ENCODE measurements at regions of chr15 and their contacts with region 1.

Region 1: DNA sequence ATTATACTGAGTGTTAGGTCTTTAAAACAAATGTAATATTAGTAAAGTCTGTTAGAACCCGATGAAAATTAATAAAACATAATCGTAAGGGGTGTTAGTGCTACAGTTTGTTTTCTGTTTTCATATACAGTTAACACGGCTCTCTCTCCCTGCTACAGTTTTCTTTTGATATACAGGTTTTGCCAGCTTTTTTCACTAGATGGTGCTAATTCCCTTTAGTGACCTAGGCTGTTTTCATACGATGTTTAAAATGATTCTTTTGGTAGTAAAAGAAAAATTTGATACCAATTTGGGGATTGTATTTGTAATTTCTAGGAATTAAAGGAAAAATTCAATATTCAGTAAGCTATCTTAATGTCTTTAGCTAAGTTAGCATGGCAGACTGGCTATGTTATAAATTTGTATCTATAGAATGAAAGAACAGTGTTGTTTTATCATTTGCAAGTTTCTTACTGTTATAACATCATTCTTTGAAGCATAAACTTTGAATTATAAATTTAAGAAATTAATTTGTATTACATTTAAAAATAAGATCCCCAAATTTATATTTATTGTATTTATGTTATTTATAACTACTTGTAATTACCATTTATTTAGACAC is 11.5 kb downstream of the APH1B start:
- DNase-seq: peak; percentile 29 to 69 (median 53)
- ATAC-seq: peak; percentile 77
- H3K4me3 ChIP-seq: no peak overlapping the region
- H3K27ac ChIP-seq: no peak overlapping the region
- H3K4me1 ChIP-seq: peaks cover 4 to 16% of the 10 kb centered on the region in 2 experiments; a peak in 4 of 5 replicates
- H3K27me3 ChIP-seq: no peaks in the 10 kb centered on the region
- CTCF ChIP-seq: peak; percentile 53 to 94 (median 68); a peak in 5 of 6 replicates
- EP300 ChIP-seq: no peak
- POLR2A ChIP-seq: no peak
- RAD21 ChIP-seq: peak; percentile 98

Region 2: DNA sequence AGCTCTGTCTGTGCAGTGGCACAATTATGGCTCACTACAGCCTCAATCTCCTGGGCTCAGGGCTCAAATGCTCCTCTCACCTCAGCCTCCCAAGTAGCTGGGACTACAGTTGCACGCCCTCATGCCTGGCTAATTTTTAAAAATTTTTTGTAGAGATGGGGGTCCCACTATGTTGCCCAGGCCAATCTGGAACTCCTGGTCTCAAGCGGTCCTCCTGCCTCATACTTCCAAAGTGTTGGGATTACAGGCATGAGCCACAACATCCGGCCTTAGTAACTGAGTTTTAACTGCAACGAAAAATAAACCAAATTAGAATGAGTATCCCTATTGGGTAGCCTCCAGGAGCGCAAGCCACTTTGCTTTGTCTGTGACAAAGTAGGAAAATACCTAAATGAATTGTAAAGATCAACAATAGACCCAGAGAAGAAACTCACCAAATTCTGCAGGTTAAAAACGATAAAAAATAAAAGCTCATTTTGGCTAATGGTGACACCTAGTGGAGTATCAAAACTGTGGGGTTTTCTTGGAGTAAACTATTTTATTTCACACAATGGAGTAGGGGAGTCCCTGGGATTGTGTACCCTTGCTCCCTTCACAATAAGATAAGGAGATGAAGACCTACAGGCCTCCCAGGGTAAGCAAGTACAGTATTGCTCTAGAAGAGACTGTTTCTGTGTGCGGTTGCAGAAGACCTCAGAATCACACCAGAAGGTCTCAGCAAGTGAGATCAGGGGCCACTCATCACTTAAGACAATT is 113.8 kb after region 1 on chr15:
- CTCF ChIA-PET with region 1: interaction called, 35 read pairs
- POLR2A ChIA-PET with region 1: interaction called, 3 read pairs
- in situ Hi-C with region 1: loop called (anchors 5 kb)
- intact Hi-C with region 1: loop called (anchors 1 kb)
- DNase-seq: peak in 3 of 4 experiments; percentile 20 to 57 (median 54)
- ATAC-seq: peak; percentile 79
- H3K4me3 ChIP-seq: no peak overlapping the region
- H3K27ac ChIP-seq: no peak overlapping the region
- H3K4me1 ChIP-seq: peaks cover 0 to 12% of the 10 kb centered on the region in 2 experiments; a peak in 3 of 5 replicates
- H3K27me3 ChIP-seq: no peaks in the 10 kb centered on the region
- CTCF ChIP-seq: peak; percentile 53 to 85 (median 58); a peak in 3 of 6 replicates
- EP300 ChIP-seq: no peak
- POLR2A ChIP-seq: no peak
- RAD21 ChIP-seq: peak; percentile 96 to 97

Region 3: DNA sequence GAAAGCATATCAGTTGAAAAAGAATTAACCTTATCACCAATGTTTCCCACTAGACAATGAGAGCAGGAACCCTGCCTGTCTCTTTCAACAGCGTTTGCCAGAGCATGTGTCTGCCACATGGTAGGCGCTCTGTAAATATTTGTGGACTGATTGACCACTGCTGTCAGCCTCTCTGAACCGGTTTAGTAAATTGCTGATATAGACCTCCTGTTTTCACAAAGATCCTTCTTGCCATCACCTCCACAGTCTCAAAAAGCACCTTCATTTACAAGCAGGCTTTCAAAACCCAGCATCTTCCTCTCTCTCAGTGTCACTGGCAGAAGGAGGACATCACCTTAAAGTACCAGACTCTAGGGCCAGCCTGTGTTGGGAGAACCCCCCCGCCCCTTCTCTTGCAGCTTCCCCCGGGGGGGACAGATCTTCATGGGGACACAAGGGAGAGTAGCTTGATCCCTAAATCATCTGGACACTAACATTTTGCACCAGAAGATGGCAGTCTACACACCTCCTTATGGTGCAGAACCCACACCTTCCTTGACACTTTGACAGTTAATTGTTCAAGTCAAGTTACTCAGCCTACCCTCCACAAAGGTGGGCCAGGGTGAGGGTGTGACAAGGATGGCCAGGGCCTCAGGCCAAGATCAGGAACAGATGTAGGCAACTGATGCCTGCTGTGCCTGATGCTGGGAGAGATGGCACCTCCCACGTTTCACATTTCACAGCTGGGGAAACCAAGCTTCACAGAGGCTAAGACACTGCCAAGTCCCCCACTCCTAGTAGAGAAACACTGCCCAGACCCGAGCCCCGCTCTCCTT is 177.7 kb after region 1 on chr15:
- CTCF ChIA-PET with region 1: interaction called, 3 read pairs
- POLR2A ChIA-PET with region 1: no interaction called
- in situ Hi-C with region 1: no loop called
- intact Hi-C with region 1: loop called (anchors 2 kb)
- DNase-seq: peak; percentile 66 to 81 (median 74)
- ATAC-seq: peak; percentile 96
- H3K4me3 ChIP-seq: no peak overlapping the region
- H3K27ac ChIP-seq: no peak overlapping the region
- H3K4me1 ChIP-seq: peaks cover 0 to 8% of the 10 kb centered on the region in 2 experiments; a peak in 2 of 5 replicates
- H3K27me3 ChIP-seq: no peaks in the 10 kb centered on the region
- CTCF ChIP-seq: peak; percentile 71 to 77 (median 76)
- EP300 ChIP-seq: no peak
- POLR2A ChIP-seq: no peak
- RAD21 ChIP-seq: peak; percentile 74 to 89

Region 4: DNA sequence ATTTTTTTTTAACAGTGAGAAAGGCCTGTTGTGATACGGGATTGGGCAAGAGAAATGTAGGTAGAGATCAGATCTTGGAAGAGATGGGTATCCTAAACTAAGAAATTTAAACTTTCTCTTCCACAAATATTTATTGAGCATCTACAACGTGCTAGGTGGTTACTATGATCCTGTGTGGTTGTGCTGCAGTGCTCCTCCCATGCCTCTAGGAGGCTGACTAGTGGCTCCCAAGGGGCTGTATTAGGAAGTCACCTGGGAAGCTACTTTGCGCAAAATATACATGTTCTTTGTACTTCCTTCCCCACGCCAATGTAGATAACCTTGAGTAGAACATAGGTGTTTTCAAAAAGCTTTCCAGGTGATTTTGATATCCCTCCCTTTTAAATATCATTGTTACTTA is 242.7 kb after region 1 on chr15:
- CTCF ChIA-PET with region 1: no interaction called
- POLR2A ChIA-PET with region 1: no interaction called
- in situ Hi-C with region 1: no loop called
- intact Hi-C with region 1: no loop called
- DNase-seq: peak; percentile 38 to 45 (median 44)
- ATAC-seq: peak; percentile 84
- H3K4me3 ChIP-seq: no peak overlapping the region
- H3K27ac ChIP-seq: no peak overlapping the region
- H3K4me1 ChIP-seq: peaks cover 3% of the 10 kb centered on the region in 2 experiments; a peak in 1 of 5 replicates
- H3K27me3 ChIP-seq: no peaks in the 10 kb centered on the region
- CTCF ChIP-seq: peak; percentile 29 to 57 (median 51)
- EP300 ChIP-seq: no peak
- POLR2A ChIP-seq: no peak
- RAD21 ChIP-seq: no peak

Region 5: GRCh38 chr15:63599401-63600000 is 310.6 kb after region 1 on chr15:
- CTCF ChIA-PET with region 1: interaction called, 3 read pairs
- POLR2A ChIA-PET with region 1: no interaction called
- in situ Hi-C with region 1: loop called (anchors 10 kb)
- intact Hi-C with region 1: no loop called
- DNase-seq: peak in 1 of 4 experiments; percentile 16
- ATAC-seq: peak; percentile 37; the same call in 2 of the 3 replicates
- H3K4me3 ChIP-seq: no peak overlapping the region
- H3K27ac ChIP-seq: no peak overlapping the region
- H3K4me1 ChIP-seq: peaks cover 0 to 18% of the 10 kb centered on the region in 2 experiments; a peak in 2 of 5 replicates
- H3K27me3 ChIP-seq: no peaks in the 10 kb centered on the region
- CTCF ChIP-seq: peak; percentile 41 to 56 (median 50)
- EP300 ChIP-seq: no peak
- POLR2A ChIP-seq: no peak
- RAD21 ChIP-seq: peak in 1 of 2 experiments; percentile 73; a peak in 2 of 4 replicates

Region 6: GRCh38 chr15:63610200-63610841 is 321.4 kb after region 1 on chr15:
- CTCF ChIA-PET with region 1: no interaction called
- POLR2A ChIA-PET with region 1: no interaction called
- in situ Hi-C with region 1: no loop called
- intact Hi-C with region 1: loop called (anchors 10 kb)
- DNase-seq: peak; percentile 70 to 84 (median 76)
- ATAC-seq: peak; percentile 97
- H3K4me3 ChIP-seq: no peak overlapping the region
- H3K27ac ChIP-seq: peak overlapping the region; percentile 57
- H3K4me1 ChIP-seq: peaks cover 0 to 11% of the 10 kb centered on the region in 2 experiments; a peak in 3 of 5 replicates
- H3K27me3 ChIP-seq: no peaks in the 10 kb centered on the region
- CTCF ChIP-seq: peak; percentile 78 to 90 (median 81)
- EP300 ChIP-seq: no peak
- POLR2A ChIP-seq: no peak
- RAD21 ChIP-seq: peak; percentile 67 to 86

Measured in K562 (cell line).